ENCODE measurements at regions of chr5 and their contacts with region 1.

Region 1: DNA sequence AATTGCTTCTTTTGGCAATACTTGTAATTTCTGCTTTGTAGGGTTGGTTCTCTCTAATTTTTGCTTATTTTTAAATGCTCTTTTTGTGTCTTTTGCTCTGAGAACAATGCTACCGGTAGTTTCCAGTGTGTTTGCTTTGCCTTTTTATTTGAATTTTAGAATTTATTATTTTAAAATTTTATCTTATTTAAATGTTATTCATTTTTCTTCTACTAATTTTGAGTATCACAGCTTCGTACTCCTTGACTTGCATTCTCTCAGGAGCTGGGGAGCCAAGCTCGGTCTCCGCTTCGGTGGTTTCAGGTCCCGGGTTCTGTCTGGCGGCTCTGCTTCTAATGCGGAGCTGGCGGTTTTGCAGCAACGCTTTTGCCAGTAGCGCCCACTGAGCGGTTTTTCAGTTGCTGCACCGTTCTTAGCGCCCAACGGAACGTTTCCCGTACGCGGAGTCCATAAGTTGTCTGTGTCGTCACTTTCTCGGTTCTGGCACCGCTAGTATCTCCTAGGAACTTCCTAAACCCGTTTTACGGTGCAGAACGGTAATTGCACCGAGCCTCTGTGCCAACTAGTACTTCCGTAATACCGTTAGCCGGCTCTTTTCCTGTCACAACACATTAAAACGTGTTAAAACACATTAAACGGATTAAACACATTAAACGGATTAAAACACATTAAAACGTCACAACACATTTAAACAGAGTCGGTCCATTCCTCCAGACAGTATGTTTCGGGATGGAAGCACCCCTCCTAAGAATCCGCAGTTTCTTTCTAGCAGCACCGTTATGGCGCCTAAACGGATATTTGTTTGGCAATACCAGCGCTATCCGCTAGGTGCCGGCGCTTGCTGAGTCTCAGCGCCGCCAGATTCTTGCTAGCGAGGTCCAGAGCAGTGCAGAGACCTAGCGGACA is 45.6 kb downstream of the ANXA2R start:
- DNase-seq: peak; percentile 81 to 94 (median 84)
- ATAC-seq: peak; percentile 59
- H3K4me3 ChIP-seq: peak overlapping the region; percentile 80
- H3K4me3 Mint-ChIP-seq: peak overlapping the region; percentile 100
- H3K27ac ChIP-seq: peak overlapping the region; percentile 93 to 98
- H3K27ac Mint-ChIP-seq: peak overlapping the region; percentile 99
- H3K4me1 ChIP-seq: peaks cover 46% of the 10 kb centered on the region
- H3K4me1 Mint-ChIP-seq: peaks cover 48% of the 10 kb centered on the region
- H3K27me3 ChIP-seq: no peaks in the 10 kb centered on the region
- H3K27me3 Mint-ChIP-seq: peaks cover 9% of the 10 kb centered on the region
- CTCF ChIP-seq: peak; percentile 85

Region 2: GRCh38 chr5:41903892-41904799 is 1090.4 kb before region 1 on chr5 and contains the start of gene RIMOC1:
- CTCF ChIA-PET with region 1: no interaction called
- POLR2A ChIA-PET with region 1: interaction called, 10 read pairs
- intact Hi-C with region 1: no loop called
- DNase-seq: peak; percentile 93 to 99 (median 96)
- ATAC-seq: peak; percentile 85
- H3K4me3 ChIP-seq: peak within 1 kb of the TSS; percentile 86
- H3K4me3 Mint-ChIP-seq: peak within 1 kb of the TSS; percentile 98
- H3K27ac ChIP-seq: peak within 1 kb of the TSS; percentile 89 to 90
- H3K27ac Mint-ChIP-seq: peak within 1 kb of the TSS; percentile 99
- H3K4me1 ChIP-seq: peaks cover 20% of the 10 kb centered on the region
- H3K4me1 Mint-ChIP-seq: peaks cover 46% of the 10 kb centered on the region
- H3K27me3 ChIP-seq: no peaks in the 10 kb centered on the region
- H3K27me3 Mint-ChIP-seq: no peaks in the 10 kb centered on the region
- CTCF ChIP-seq: no peak
- total RNA-seq, gene RIMOC1: 9.3 to 10.3 TPM

Region 3: GRCh38 chr5:42950440-42951292 is 43.8 kb before region 1 on chr5:
- CTCF ChIA-PET with region 1: interaction called, 52 read pairs
- POLR2A ChIA-PET with region 1: interaction called, 465 read pairs
- intact Hi-C with region 1: loop called (anchors 1 kb)
- DNase-seq: peak; percentile 35 to 90 (median 61)
- ATAC-seq: peak; percentile 41
- H3K4me3 ChIP-seq: peak overlapping the region; percentile 75
- H3K4me3 Mint-ChIP-seq: peak overlapping the region; percentile 98
- H3K27ac ChIP-seq: peak overlapping the region; percentile 96 to 98
- H3K27ac Mint-ChIP-seq: peak overlapping the region; percentile 99
- H3K4me1 ChIP-seq: peaks cover 45% of the 10 kb centered on the region
- H3K4me1 Mint-ChIP-seq: peaks cover 30% of the 10 kb centered on the region
- H3K27me3 ChIP-seq: no peaks in the 10 kb centered on the region
- H3K27me3 Mint-ChIP-seq: no peaks in the 10 kb centered on the region
- CTCF ChIP-seq: no peak

Region 4: GRCh38 chr5:43019614-43020293 is 25.3 kb after region 1 on chr5:
- CTCF ChIA-PET with region 1: interaction called, 87 read pairs
- POLR2A ChIA-PET with region 1: interaction called, 1,251 read pairs
- intact Hi-C with region 1: loop called (anchors 1 kb)
- DNase-seq: peak; percentile 73 to 97 (median 84)
- ATAC-seq: peak; percentile 61
- H3K4me3 ChIP-seq: peak overlapping the region; percentile 80
- H3K4me3 Mint-ChIP-seq: peak overlapping the region; percentile 99
- H3K27ac ChIP-seq: peak overlapping the region; percentile 98
- H3K27ac Mint-ChIP-seq: peak overlapping the region; percentile 100
- H3K4me1 ChIP-seq: peaks cover 42% of the 10 kb centered on the region
- H3K4me1 Mint-ChIP-seq: peaks cover 57% of the 10 kb centered on the region
- H3K27me3 ChIP-seq: no peaks in the 10 kb centered on the region
- H3K27me3 Mint-ChIP-seq: no peaks in the 10 kb centered on the region
- CTCF ChIP-seq: peak; percentile 69

Region 5: GRCh38 chr5:43066799-43067741 is 72.6 kb after region 1 on chr5:
- CTCF ChIA-PET with region 1: interaction called, 26 read pairs
- POLR2A ChIA-PET with region 1: interaction called, 412 read pairs
- intact Hi-C with region 1: loop called (anchors 1 to 2 kb)
- DNase-seq: peak; percentile 84 to 94 (median 90)
- ATAC-seq: peak; percentile 45
- H3K4me3 ChIP-seq: peak overlapping the region; percentile 78
- H3K4me3 Mint-ChIP-seq: peak overlapping the region; percentile 97
- H3K27ac ChIP-seq: peak overlapping the region; percentile 97 to 98
- H3K27ac Mint-ChIP-seq: peak overlapping the region; percentile 96
- H3K4me1 ChIP-seq: peaks cover 55% of the 10 kb centered on the region
- H3K4me1 Mint-ChIP-seq: peaks cover 49% of the 10 kb centered on the region
- H3K27me3 ChIP-seq: no peaks in the 10 kb centered on the region
- H3K27me3 Mint-ChIP-seq: no peaks in the 10 kb centered on the region
- CTCF ChIP-seq: no peak

Region 6: DNA sequence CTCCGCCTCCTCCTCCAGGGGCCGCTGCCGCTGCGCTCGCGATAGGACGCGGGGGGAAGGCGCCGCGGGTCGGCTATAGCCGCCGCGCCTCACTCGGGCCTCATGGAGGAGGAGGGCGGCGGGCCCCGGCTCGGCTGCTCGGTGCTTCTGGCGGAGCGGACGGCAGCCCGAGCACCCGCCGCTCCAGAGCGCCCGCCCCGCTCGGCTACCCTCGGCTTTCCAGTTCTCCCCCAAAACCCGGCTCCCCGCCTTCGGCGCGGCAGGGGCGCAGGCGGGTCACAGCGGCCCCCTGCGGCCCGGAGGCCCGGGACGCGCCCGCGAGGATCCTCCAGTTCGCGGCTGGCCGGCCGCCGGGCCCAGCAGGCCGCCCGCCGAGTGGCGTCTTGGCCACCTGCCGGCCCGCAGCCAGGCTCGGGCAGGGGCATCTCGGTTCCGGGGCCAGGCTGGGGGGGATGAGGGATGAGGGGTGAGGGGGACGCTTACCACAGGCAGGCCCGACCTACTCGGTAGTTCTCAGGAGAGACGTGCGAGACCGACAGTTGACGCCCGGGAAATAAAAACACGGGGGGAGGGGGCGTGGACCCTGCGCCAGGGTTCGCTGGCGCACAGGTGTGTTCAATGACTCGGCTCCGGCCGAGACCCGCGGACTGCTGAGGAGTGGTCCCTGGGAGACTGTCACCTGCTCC is 562.5 kb after region 1 on chr5 and contains the start of gene PAIP1:
- CTCF ChIA-PET with region 1: no interaction called
- POLR2A ChIA-PET with region 1: interaction called, 3 read pairs
- intact Hi-C with region 1: loop called in 1 of 2 experiments (anchors 10 kb)
- DNase-seq: peak; percentile 65 to 93 (median 78)
- ATAC-seq: peak; percentile 82
- H3K4me3 ChIP-seq: peak within 1 kb of the TSS; percentile 96
- H3K4me3 Mint-ChIP-seq: peak within 1 kb of the TSS; percentile 97
- H3K27ac ChIP-seq: peak within 1 kb of the TSS; percentile 85 to 89
- H3K27ac Mint-ChIP-seq: peak within 1 kb of the TSS; percentile 94
- H3K4me1 ChIP-seq: peaks cover 27% of the 10 kb centered on the region
- H3K4me1 Mint-ChIP-seq: peaks cover 6% of the 10 kb centered on the region
- H3K27me3 ChIP-seq: no peaks in the 10 kb centered on the region
- H3K27me3 Mint-ChIP-seq: peaks cover 11% of the 10 kb centered on the region
- CTCF ChIP-seq: peak; percentile 59
- total RNA-seq, gene PAIP1: 33.9 to 35.1 TPM